ENCODE measurements at regions of chr6 and their contacts with region 1.

Region 1: GRCh38 chr6:11460001-11460668 is 77.4 kb upstream of the TMEM170B start:
- DNase-seq: peak; percentile 66
- H3K4me3 Mint-ChIP-seq: peak overlapping the region; percentile 78
- H3K27ac Mint-ChIP-seq: peak overlapping the region; percentile 95
- H3K4me1 Mint-ChIP-seq: peaks cover 27% of the 10 kb centered on the region
- H3K27me3 Mint-ChIP-seq: no peaks in the 10 kb centered on the region

Region 2: DNA sequence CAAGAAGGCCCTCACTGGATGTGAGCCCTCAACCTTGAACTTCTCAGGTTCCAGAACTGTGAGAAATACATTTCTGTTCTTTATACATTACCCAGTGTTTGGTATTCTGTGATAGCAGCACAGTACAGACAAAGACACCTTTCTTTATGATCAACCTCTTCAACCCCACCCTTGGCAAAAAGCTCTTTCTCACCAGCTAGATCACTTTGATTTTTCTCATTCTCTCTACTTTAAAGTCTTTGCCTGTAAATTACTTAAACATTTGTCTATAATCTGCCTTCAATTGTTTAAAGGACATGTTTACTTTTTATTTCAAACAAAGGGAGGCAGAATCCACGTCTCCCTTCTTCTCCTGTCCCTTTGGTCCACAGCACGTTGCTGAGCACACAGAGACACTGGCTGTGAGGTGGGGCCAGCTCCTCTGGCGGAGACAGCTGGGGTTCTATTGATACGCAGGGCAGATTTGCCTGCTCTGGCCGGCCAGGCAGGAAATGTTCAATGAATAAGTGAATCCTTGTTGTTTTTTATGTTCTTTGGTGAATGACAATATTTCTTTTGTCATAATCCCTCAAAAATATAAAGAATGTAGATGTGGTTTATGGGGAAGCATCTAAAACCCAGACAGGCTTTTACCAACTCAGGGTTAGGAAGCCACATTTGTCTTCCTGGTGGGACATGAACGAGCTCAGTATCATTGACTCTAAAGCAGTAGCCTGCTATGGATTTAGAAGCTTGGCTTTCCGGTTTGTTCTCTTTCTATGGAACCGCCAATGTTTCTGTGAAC is 280.5 kb before region 1 on chr6:
- intact Hi-C with region 1: no loop called
- DNase-seq: peak; percentile 43
- H3K4me3 Mint-ChIP-seq: no peak overlapping the region
- H3K27ac Mint-ChIP-seq: no peak overlapping the region
- H3K4me1 Mint-ChIP-seq: peaks cover 5% of the 10 kb centered on the region
- H3K27me3 Mint-ChIP-seq: no peaks in the 10 kb centered on the region

Region 3: GRCh38 chr6:11317885-11318771 is 142.0 kb before region 1 on chr6:
- intact Hi-C with region 1: loop called (anchors 1 kb)
- DNase-seq: peak; percentile 87
- H3K4me3 Mint-ChIP-seq: peak overlapping the region; percentile 0
- H3K27ac Mint-ChIP-seq: peak overlapping the region; percentile 81
- H3K4me1 Mint-ChIP-seq: peaks cover 54% of the 10 kb centered on the region
- H3K27me3 Mint-ChIP-seq: no peaks in the 10 kb centered on the region

Region 4: GRCh38 chr6:11381801-11382513 is 78.2 kb before region 1 on chr6:
- intact Hi-C with region 1: loop called (anchors 1 kb)
- DNase-seq: peak; percentile 92
- H3K4me3 Mint-ChIP-seq: peak overlapping the region; percentile 71
- H3K27ac Mint-ChIP-seq: peak overlapping the region; percentile 87
- H3K4me1 Mint-ChIP-seq: peaks cover 62% of the 10 kb centered on the region
- H3K27me3 Mint-ChIP-seq: peaks cover 1% of the 10 kb centered on the region

Region 5: GRCh38 chr6:11423072-11423471 is 37.1 kb before region 1 on chr6:
- intact Hi-C with region 1: loop called (anchors 2 kb)
- DNase-seq: peak; percentile 54
- H3K4me3 Mint-ChIP-seq: peak overlapping the region; percentile 58
- H3K27ac Mint-ChIP-seq: peak overlapping the region; percentile 86
- H3K4me1 Mint-ChIP-seq: peaks cover 43% of the 10 kb centered on the region
- H3K27me3 Mint-ChIP-seq: no peaks in the 10 kb centered on the region

Region 6: DNA sequence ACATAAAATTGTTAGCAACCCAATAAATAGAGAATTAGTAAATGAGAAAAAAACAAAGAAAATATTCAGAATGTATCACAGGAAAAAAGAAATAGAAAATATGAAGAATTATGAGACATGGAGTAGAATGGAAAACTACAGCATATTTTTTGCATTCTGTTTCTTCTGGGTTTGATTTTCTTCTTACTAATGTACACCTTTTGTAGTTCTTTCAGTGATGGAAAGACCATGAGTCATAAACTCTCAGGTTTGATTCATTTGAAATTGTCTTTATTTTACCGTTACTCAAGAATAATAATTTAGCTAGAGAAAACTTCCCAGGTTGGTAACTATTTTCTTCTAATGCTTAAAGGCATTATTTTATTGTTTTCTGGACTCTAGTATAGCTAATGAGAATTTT is 12.9 kb before region 1 on chr6:
- intact Hi-C with region 1: loop called (anchors 1 kb)
- DNase-seq: no peak
- H3K4me3 Mint-ChIP-seq: no peak overlapping the region
- H3K27ac Mint-ChIP-seq: no peak overlapping the region
- H3K4me1 Mint-ChIP-seq: peaks cover 23% of the 10 kb centered on the region
- H3K27me3 Mint-ChIP-seq: no peaks in the 10 kb centered on the region

Region 7: DNA sequence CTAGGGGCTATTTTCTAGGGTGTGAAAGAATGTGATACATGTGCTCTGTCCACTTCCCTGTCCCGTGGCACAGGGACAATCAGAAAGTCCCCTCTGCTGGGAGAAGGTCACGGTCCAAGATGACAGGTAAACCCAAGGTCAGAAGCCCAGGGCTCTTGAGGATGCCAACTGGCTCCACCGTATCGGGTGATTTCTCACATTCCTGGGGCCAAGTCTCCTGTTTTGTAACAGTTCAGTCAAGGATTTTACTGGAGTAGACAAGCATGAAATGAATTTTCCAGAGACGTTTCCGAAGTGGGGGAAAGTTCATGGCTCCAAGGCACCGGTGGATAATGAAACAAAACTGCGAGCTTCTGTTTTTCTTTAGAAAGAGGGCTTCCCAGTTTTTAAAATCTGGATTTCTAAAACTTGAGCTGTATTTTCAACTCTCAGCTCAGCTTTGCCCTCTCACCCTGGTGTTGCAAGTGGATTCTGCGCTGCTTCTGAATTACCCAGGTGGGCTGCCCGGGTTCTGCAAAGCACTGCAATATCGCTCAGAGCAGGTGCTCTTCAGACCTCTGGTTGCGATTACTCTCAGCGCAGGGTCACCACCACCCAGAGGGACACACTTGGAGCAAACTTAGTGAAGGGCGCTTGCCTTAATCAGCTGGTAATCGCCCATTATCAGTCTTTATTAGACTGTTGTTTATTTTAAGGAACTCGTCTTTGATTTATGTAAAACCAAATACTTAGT is 13.0 kb after region 1 on chr6:
- intact Hi-C with region 1: no loop called
- DNase-seq: no peak
- H3K4me3 Mint-ChIP-seq: no peak overlapping the region
- H3K27ac Mint-ChIP-seq: no peak overlapping the region
- H3K4me1 Mint-ChIP-seq: peaks cover 4% of the 10 kb centered on the region
- H3K27me3 Mint-ChIP-seq: peaks cover 22% of the 10 kb centered on the region